Body of pancreas (tissue), 4 donors: ENCODE measurements at regions of chr11 and their contacts with region 1.

Region 1: DNA sequence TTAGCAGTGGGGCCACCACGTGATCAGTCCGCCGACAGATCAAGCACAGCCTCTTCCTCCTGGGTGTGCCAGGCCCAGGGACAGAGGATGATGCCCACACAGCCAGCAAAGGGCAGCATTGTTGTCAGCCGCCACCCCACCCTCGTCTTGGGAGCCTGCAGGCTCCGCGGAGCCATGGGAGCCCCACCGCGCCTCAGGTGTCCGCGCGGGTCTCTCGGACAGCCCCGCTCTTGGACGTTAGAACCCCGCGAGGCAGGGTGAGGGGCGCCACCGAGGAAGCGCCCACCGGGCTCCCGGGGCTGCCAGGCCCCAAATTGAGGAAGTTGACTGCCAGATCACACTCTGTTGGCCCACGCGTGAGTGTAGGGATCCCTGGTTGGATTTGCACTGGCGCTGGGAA is 83.9 kb upstream of the MS4A8 start:
- DNase-seq: no peak
- ATAC-seq: no peak
- H3K4me3 ChIP-seq: no peak overlapping the region
- H3K27ac ChIP-seq: no peak overlapping the region
- H3K4me1 ChIP-seq: peaks cover 6% of the 10 kb centered on the region
- H3K27me3 ChIP-seq: no peaks in the 10 kb centered on the region
- CTCF ChIP-seq: no peak
- POLR2A ChIP-seq: no peak

Region 2: GRCh38 chr11:60265373-60266214 is 349.9 kb before region 1 on chr11:
- intact Hi-C with region 1: loop called (anchors 10 kb)
- DNase-seq: peak in 1 of 4 donors; percentile 24
- ATAC-seq: peak; percentile 45
- H3K4me3 ChIP-seq: no peak overlapping the region
- H3K27ac ChIP-seq: no peak overlapping the region
- H3K4me1 ChIP-seq: no peaks in the 10 kb centered on the region
- H3K27me3 ChIP-seq: no peaks in the 10 kb centered on the region
- CTCF ChIP-seq: peak; percentile 47 to 79 (median 74)
- POLR2A ChIP-seq: no peak

Region 3: GRCh38 chr11:60363542-60364510 is 251.7 kb before region 1 on chr11:
- intact Hi-C with region 1: loop called (anchors 5 kb)
- DNase-seq: peak; percentile 73 to 76 (median 74)
- ATAC-seq: peak; percentile 85
- H3K4me3 ChIP-seq: no peak overlapping the region
- H3K27ac ChIP-seq: peak overlapping the region in 1 of 4 donors; percentile 31
- H3K4me1 ChIP-seq: no peaks in the 10 kb centered on the region
- H3K27me3 ChIP-seq: no peaks in the 10 kb centered on the region
- CTCF ChIP-seq: peak in 6 of 7 experiments; percentile 67 to 86 (median 78)
- POLR2A ChIP-seq: no peak

Region 4: DNA sequence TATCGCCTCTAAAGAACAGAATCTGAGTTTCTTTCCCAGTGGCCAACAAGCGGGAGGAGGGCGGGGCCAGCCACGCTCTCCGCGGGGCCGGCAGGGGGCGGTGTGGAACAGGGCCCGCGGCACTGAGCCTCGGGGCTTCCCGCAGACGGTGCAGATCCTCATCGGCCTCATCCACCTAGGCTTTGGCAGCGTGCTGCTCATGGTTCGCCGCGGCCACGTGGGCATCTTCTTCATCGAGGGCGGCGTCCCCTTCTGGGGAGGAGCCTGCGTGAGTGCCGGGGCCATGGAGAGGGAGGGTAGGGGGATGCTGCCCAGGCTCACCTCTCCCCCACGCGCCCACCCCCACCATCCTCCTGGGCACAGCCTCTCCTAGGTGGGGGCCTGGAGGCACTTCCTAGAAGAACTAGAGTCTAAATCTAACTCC is 151.9 kb after region 1 on chr11:
- intact Hi-C with region 1: no loop called
- DNase-seq: no peak
- ATAC-seq: no peak
- H3K4me3 ChIP-seq: no peak overlapping the region
- H3K27ac ChIP-seq: no peak overlapping the region
- H3K4me1 ChIP-seq: peaks cover 19% of the 10 kb centered on the region
- H3K27me3 ChIP-seq: no peaks in the 10 kb centered on the region
- CTCF ChIP-seq: peak in 1 of 7 experiments; percentile 2
- POLR2A ChIP-seq: no peak